ENCODE measurements at regions of chrX and their contacts with region 1.

Region 1: GRCh38 chrX:100368167-100368566 is 41.9 kb downstream of the PCDH19 start:
- DNase-seq: peak; percentile 29
- ATAC-seq: peak; percentile 90
- H3K4me3 Mint-ChIP-seq: no peak overlapping the region
- H3K27ac Mint-ChIP-seq: no peak overlapping the region
- H3K4me1 Mint-ChIP-seq: peaks cover 4% of the 10 kb centered on the region
- H3K27me3 Mint-ChIP-seq: no peaks in the 10 kb centered on the region
- CTCF ChIP-seq: peak; percentile 33; the same call in 1 of the 2 replicates

Region 2: GRCh38 chrX:100379388-100379986 is 11.3 kb after region 1 on chrX:
- CTCF ChIA-PET with region 1: interaction called, 31 read pairs
- POLR2A ChIA-PET with region 1: no interaction called
- DNase-seq: no peak
- ATAC-seq: peak; percentile 32; the same call in 1 of the 2 replicates
- H3K4me3 Mint-ChIP-seq: no peak overlapping the region
- H3K27ac Mint-ChIP-seq: no peak overlapping the region
- H3K4me1 Mint-ChIP-seq: peaks cover 24% of the 10 kb centered on the region
- H3K27me3 Mint-ChIP-seq: no peaks in the 10 kb centered on the region; the same call in 1 of the 2 replicates
- CTCF ChIP-seq: no peak

Region 3: DNA sequence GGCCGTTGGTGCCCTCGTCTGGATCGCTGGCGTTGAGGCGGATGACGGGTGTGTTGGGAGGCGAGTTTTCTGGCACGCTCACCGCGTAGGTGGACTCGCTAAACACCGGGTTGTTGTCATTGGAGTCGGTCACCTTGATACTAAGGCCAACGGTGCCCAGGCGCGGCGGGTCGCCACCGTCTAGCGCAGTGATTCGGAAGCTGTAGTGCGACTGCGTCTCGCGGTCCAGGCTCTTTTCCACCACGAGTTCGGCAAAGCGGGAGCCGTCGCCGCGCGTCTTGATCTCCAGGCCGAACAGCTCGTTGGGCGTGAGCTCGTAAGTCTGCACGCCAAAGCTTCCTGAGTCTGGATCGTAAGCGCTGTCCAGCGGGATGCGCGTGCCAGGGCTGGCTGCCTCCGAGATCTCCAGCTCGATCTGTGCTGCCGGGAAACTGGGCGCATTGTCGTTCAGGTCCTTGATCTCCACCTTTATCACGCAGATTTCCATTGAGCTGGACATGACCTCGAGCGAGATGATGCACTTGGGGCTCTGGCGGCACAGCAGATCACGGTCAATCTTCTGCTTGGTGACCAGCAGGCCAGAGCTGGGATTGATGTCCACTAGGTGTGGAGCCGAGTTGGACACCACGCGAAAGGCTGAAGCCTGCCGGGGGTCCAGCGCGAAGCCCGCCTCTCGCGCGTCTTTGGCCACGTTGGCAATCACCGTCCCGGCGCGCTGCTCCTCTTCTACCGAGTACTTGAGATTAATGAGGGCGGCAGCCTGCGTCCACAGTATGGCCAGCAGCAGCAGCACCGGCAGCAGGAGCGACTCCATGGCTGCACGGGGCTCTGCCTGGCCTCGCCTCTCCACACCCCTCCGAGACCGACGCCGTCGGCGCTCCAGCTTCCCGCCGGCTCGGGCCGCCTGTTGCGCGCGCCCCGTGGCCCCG is 39.9 kb after region 1 on chrX:
- CTCF ChIA-PET with region 1: interaction called, 53 read pairs
- POLR2A ChIA-PET with region 1: interaction called, 5 read pairs
- DNase-seq: no peak
- ATAC-seq: no peak
- H3K4me3 Mint-ChIP-seq: peak overlapping the region; percentile 54
- H3K27ac Mint-ChIP-seq: no peak overlapping the region
- H3K4me1 Mint-ChIP-seq: peaks cover 37% of the 10 kb centered on the region
- H3K27me3 Mint-ChIP-seq: peaks cover 97% of the 10 kb centered on the region
- CTCF ChIP-seq: no peak

Region 4: DNA sequence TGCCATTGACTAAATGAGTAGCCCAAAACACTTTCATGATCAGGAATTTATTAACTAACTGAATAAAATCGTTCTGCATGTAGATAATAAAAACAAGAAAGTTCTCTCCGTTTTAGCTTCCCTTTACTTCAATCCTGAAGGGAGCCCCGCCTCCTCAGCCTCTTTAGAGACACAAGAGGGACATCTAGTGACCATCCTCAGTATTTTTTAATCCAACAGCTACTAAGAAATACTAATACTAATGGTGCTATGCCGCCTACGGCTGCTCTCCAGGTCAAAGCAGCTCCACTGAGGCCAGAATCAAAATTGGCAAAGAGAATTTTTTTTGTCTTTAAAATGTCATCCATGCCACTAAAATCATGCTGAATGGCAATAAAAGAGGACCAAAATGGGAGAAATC is 45.1 kb after region 1 on chrX:
- CTCF ChIA-PET with region 1: interaction called, 53 read pairs
- POLR2A ChIA-PET with region 1: interaction called, 5 read pairs
- DNase-seq: no peak
- ATAC-seq: peak; percentile 11; the same call in 1 of the 2 replicates
- H3K4me3 Mint-ChIP-seq: peak overlapping the region; percentile 69
- H3K27ac Mint-ChIP-seq: no peak overlapping the region
- H3K4me1 Mint-ChIP-seq: peaks cover 41% of the 10 kb centered on the region
- H3K27me3 Mint-ChIP-seq: peaks cover 65% of the 10 kb centered on the region
- CTCF ChIP-seq: no peak

Region 5: GRCh38 chrX:100435706-100436105 is 67.5 kb after region 1 on chrX:
- CTCF ChIA-PET with region 1: no interaction called
- POLR2A ChIA-PET with region 1: no interaction called
- DNase-seq: no peak
- ATAC-seq: peak; percentile 56; the same call in 1 of the 2 replicates
- H3K4me3 Mint-ChIP-seq: no peak overlapping the region
- H3K27ac Mint-ChIP-seq: 0 out of 2 replicates have a peak overlapping the region, but pooled peaks have one; percentile 53
- H3K4me1 Mint-ChIP-seq: peaks cover 30% of the 10 kb centered on the region
- H3K27me3 Mint-ChIP-seq: peaks cover 2% of the 10 kb centered on the region; the same call in 1 of the 2 replicates
- CTCF ChIP-seq: no peak

Region 6: DNA sequence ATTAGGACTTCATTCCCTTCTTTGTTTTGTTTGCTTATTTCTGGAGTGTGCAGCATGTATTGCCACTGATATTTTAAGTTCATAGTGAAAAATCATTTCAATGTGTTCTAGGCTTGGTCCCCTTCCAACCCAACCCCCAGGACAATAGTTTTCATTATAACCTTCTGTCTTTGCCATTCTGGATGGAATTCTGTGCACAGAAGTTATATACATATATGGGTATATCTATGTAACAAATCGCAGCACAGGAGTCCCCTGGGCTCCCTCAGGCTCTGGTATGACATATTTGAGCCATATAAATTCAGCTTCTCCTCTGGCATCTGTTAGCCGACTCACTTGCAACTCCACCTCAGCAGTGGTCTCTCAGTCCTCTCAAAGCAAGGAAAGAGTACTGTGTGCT is 216.4 kb after region 1 on chrX and contains the start of gene TNMD:
- CTCF ChIA-PET with region 1: no interaction called
- POLR2A ChIA-PET with region 1: no interaction called
- DNase-seq: no peak
- ATAC-seq: no peak
- H3K4me3 Mint-ChIP-seq: no peak within 1 kb of the TSS
- H3K27ac Mint-ChIP-seq: no peak within 1 kb of the TSS
- H3K4me1 Mint-ChIP-seq: no peaks in the 10 kb centered on the region
- H3K27me3 Mint-ChIP-seq: no peaks in the 10 kb centered on the region; the same call in 1 of the 2 replicates
- CTCF ChIP-seq: no peak
- total RNA-seq, gene TNMD: 1.9 to 3.3 TPM (median 2.8 TPM) in 3 replicates

Region 7: DNA sequence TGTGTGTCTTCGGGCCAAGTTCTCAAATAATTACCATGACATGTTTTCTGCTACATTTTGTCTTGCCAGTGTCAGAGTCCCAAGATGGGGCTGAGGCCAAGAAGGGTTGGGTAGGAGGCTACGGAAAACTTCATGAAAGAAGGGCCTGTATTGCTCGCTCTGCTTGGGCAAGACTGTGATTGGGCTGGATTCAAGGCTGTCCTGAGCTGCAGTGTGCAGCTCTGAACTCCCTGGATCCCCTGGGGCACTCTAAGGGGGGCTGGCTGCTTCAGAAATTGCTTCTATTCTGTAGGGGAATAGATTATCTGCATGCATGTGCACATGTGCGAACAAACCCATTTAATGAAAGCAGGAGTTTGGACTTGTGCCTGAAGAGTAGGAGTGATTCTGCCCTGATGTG is 254.8 kb after region 1 on chrX:
- CTCF ChIA-PET with region 1: no interaction called
- POLR2A ChIA-PET with region 1: no interaction called
- DNase-seq: no peak
- ATAC-seq: no peak
- H3K4me3 Mint-ChIP-seq: no peak overlapping the region
- H3K27ac Mint-ChIP-seq: no peak overlapping the region
- H3K4me1 Mint-ChIP-seq: no peaks in the 10 kb centered on the region
- H3K27me3 Mint-ChIP-seq: no peaks in the 10 kb centered on the region
- CTCF ChIP-seq: no peak